IMR-90 (cell line): ENCODE measurements at regions of chr14 and their contacts with region 1.

Region 1: GRCh38 chr14:77028384-77029231 is at the start of gene IRF2BPL:
- DNase-seq: peak; percentile 99
- ATAC-seq: peak; percentile 63
- H3K4me3 ChIP-seq: peak within 1 kb of the TSS; percentile 97
- H3K27ac ChIP-seq: peak within 1 kb of the TSS; percentile 99
- H3K4me1 ChIP-seq: peaks cover 13% of the 10 kb centered on the region
- H3K27me3 ChIP-seq: no peaks in the 10 kb centered on the region
- CTCF ChIP-seq: no peak
- POLR2A ChIP-seq: peak; percentile 80
- RAD21 ChIP-seq: peak; percentile 15; the same call in 1 of the 2 replicates
- total RNA-seq, gene IRF2BPL: 6.3 and 8.9 TPM in 2 replicates

Region 2: GRCh38 chr14:76784266-76785264 is 244.0 kb before region 1 on chr14:
- CTCF ChIA-PET with region 1: no interaction called
- POLR2A ChIA-PET with region 1: no interaction called
- dilution Hi-C with region 1: no loop called
- in situ Hi-C with region 1: no loop called
- intact Hi-C with region 1: no loop called
- DNase-seq: peak; percentile 75
- ATAC-seq: peak; percentile 96
- H3K4me3 ChIP-seq: no peak overlapping the region
- H3K27ac ChIP-seq: no peak overlapping the region
- H3K4me1 ChIP-seq: peaks cover 4% of the 10 kb centered on the region; the same call in 1 of the 2 replicates
- H3K27me3 ChIP-seq: no peaks in the 10 kb centered on the region
- CTCF ChIP-seq: peak; percentile 96
- POLR2A ChIP-seq: no peak
- RAD21 ChIP-seq: peak; percentile 84

Region 3: GRCh38 chr14:76956316-76957090 is 72.1 kb before region 1 on chr14:
- CTCF ChIA-PET with region 1: interaction called, 3 read pairs
- POLR2A ChIA-PET with region 1: interaction called, 7 read pairs
- dilution Hi-C with region 1: no loop called
- in situ Hi-C with region 1: no loop called
- intact Hi-C with region 1: loop called (anchors 1 kb)
- DNase-seq: peak; percentile 89
- ATAC-seq: peak; percentile 74
- H3K4me3 ChIP-seq: peak overlapping the region; percentile 5; the same call in 1 of the 2 replicates
- H3K27ac ChIP-seq: peak overlapping the region; percentile 91
- H3K4me1 ChIP-seq: peaks cover 41% of the 10 kb centered on the region
- H3K27me3 ChIP-seq: no peaks in the 10 kb centered on the region
- CTCF ChIP-seq: no peak
- POLR2A ChIP-seq: no peak
- RAD21 ChIP-seq: peak; percentile 38

Region 4: DNA sequence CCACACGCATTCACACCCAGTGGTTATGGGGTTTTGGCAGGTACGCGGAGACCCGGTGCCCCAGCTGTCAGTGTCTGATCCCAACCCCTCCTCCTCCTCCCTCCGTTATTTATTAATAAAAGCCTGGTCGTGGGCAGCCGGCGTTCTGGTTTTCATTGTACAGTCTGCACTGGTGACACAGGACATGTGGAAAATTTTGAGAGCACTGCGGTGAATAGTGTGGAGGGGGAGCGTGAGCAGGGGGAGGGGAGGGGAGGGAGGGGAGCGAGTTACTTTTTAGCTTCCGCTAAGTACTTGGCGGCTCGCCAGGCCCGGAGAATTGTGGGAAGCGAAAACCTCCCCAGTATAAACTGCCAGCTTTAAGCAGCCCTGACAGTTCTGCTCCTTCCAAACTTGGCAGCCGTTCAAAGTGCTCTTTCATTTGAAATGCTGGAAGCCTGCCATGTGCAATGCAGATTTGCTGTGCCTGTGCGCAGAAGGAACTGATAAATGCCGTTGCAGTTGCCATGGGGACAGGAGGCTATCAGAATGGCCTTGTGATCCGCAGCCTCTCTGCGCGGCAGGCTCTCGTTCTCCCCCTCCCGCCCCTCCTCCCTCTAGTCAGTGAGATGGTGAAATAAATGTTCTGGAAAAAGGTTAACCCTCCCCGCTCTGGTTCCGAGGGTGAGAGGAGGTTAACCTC is 11.6 kb after region 1 on chr14:
- CTCF ChIA-PET with region 1: interaction called, 5 read pairs
- POLR2A ChIA-PET with region 1: interaction called, 9 read pairs
- dilution Hi-C with region 1: no loop called
- in situ Hi-C with region 1: no loop called
- intact Hi-C with region 1: loop called (anchors 1 kb)
- DNase-seq: peak; percentile 99
- ATAC-seq: peak; percentile 50
- H3K4me3 ChIP-seq: peak overlapping the region; percentile 6; the same call in 1 of the 2 replicates
- H3K27ac ChIP-seq: peak overlapping the region; percentile 84
- H3K4me1 ChIP-seq: peaks cover 42% of the 10 kb centered on the region
- H3K27me3 ChIP-seq: no peaks in the 10 kb centered on the region
- CTCF ChIP-seq: no peak
- POLR2A ChIP-seq: no peak
- RAD21 ChIP-seq: no peak

Region 5: GRCh38 chr14:77053046-77053841 is 24.6 kb after region 1 on chr14:
- CTCF ChIA-PET with region 1: interaction called, 3 read pairs
- POLR2A ChIA-PET with region 1: interaction called, 5 read pairs
- dilution Hi-C with region 1: no loop called
- in situ Hi-C with region 1: no loop called
- intact Hi-C with region 1: loop called (anchors 1 kb)
- DNase-seq: peak; percentile 76
- ATAC-seq: peak; percentile 87
- H3K4me3 ChIP-seq: no peak overlapping the region
- H3K27ac ChIP-seq: no peak overlapping the region
- H3K4me1 ChIP-seq: peaks cover 10% of the 10 kb centered on the region
- H3K27me3 ChIP-seq: no peaks in the 10 kb centered on the region
- CTCF ChIP-seq: peak; percentile 94
- POLR2A ChIP-seq: peak; percentile 55; the same call in 1 of the 2 replicates
- RAD21 ChIP-seq: peak; percentile 98

Region 6: GRCh38 chr14:77961644-77962580 is 933.3 kb after region 1 on chr14:
- CTCF ChIA-PET with region 1: no interaction called
- POLR2A ChIA-PET with region 1: interaction called, 13 read pairs
- dilution Hi-C with region 1: no loop called
- in situ Hi-C with region 1: no loop called
- intact Hi-C with region 1: no loop called
- DNase-seq: no peak
- ATAC-seq: no peak
- H3K4me3 ChIP-seq: no peak overlapping the region
- H3K27ac ChIP-seq: no peak overlapping the region
- H3K4me1 ChIP-seq: no peaks in the 10 kb centered on the region
- H3K27me3 ChIP-seq: peaks cover 2% of the 10 kb centered on the region; the same call in 1 of the 2 replicates
- CTCF ChIP-seq: no peak
- POLR2A ChIP-seq: no peak
- RAD21 ChIP-seq: no peak